ENCODE measurements at regions of chr17 and their contacts with region 1.

Region 1: GRCh38 chr17:45247429-45248131 is 14.3 kb downstream of the SPATA32 start:
- DNase-seq: peak; percentile 94
- H3K4me3 ChIP-seq: peak overlapping the region; percentile 67 to 84 (median 79)
- H3K27ac ChIP-seq: peak overlapping the region; percentile 31
- H3K4me1 ChIP-seq: peaks cover 16% of the 10 kb centered on the region
- H3K27me3 ChIP-seq: no peaks in the 10 kb centered on the region
- CTCF ChIP-seq: no peak

Region 2: DNA sequence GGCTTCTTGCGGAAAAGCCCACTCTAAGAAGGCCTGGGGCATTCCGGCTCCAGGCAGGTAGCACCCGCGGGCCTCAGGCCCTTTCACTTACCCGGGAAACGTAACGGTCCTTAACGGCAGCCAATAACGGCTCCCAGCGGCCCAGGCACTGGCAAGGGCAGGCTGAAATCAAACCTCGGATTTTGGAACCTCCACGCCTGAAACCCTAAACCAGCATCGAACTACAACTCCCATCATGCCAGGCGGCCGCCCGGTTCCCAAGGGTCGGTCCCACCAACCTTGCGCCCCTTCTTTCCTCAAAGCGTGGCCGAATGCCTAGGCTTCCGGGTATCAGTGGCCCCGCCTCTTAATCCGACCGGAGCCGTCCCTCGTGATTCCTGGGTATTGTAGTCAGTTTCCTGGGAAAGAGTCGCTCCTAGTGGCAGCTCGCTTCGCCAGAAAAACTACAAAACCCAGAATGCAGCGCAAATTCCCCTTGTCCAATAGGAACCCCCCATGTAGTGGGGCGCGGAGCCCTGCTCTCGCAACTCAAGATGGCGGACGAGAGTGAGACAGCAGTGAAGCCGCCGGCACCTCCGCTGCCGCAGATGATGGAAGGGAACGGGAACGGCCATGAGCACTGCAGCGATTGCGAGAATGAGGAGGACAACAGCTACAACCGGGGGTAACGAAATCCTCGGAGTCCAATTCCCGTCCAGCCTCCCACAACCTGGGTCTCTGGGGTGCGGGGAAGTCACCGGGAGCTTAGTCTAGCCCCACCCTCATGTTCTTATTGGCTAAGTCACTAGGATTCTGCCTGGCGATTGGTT is 186.6 kb before region 1 on chr17 and contains the start of gene NMT1:
- CTCF ChIA-PET with region 1: no interaction called
- dilution Hi-C with region 1: loop called (anchors 10 kb)
- in situ Hi-C with region 1: no loop called
- intact Hi-C with region 1: no loop called
- DNase-seq: peak; percentile 99
- H3K4me3 ChIP-seq: peak within 1 kb of the TSS; percentile 84 to 100 (median 92)
- H3K27ac ChIP-seq: peak within 1 kb of the TSS; percentile 94
- H3K4me1 ChIP-seq: peaks cover 13% of the 10 kb centered on the region
- H3K27me3 ChIP-seq: no peaks in the 10 kb centered on the region
- CTCF ChIP-seq: no peak
- total RNA-seq, gene NMT1: 80.0 to 143 TPM

Region 3: GRCh38 chr17:45155029-45155428 is 92.6 kb before region 1 on chr17:
- CTCF ChIA-PET with region 1: no interaction called
- dilution Hi-C with region 1: loop called (anchors 5 kb)
- in situ Hi-C with region 1: no loop called
- intact Hi-C with region 1: no loop called
- DNase-seq: no peak
- H3K4me3 ChIP-seq: no peak overlapping the region
- H3K27ac ChIP-seq: no peak overlapping the region
- H3K4me1 ChIP-seq: peaks cover 18% of the 10 kb centered on the region
- H3K27me3 ChIP-seq: no peaks in the 10 kb centered on the region
- CTCF ChIP-seq: no peak

Region 4: DNA sequence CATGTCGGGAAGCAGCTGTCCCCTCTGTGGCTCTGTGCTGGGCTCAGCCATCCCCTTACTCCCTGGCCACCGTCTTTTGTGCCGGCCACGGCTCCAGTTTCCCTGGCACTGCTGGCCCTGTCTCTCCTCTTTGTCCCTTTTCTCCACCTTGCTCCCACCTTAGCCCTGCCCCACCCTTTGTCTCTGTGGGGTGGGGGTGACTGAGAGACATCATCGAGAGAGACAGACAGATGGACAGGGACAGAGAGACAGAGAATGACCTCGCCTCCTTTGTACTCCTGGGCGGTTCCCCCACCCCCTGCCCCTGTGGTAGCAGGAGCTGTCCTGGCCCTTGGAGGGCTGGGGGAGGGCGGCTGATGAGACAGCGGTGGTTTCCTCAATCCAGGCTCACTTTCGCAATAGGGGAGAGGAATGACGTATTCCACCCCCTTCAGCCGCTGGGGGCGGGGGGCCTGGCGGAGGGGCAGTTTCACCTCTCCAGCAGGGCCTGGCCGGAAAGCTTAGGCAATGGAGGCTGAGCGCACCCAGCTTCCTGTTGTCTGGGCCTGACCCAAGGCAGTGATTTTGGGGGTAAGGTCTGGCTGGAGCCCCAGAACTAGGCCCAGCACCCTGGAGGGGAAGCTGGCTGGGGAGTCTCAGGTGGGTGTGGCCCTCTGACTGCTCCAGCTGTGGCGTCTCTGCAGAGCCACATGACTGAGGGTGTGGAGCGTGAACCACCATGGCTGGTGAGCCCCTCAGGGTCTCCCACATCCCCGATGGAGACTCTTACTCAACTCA is 18.6 kb before region 1 on chr17:
- CTCF ChIA-PET with region 1: no interaction called
- dilution Hi-C with region 1: no loop called
- in situ Hi-C with region 1: no loop called
- intact Hi-C with region 1: loop called (anchors 2 kb)
- DNase-seq: peak; percentile 90
- H3K4me3 ChIP-seq: no peak overlapping the region
- H3K27ac ChIP-seq: peak overlapping the region; percentile 50
- H3K4me1 ChIP-seq: peaks cover 50% of the 10 kb centered on the region
- H3K27me3 ChIP-seq: no peaks in the 10 kb centered on the region
- CTCF ChIP-seq: no peak

Region 5: GRCh38 chr17:45293413-45294211 is 46.0 kb after region 1 on chr17:
- CTCF ChIA-PET with region 1: no interaction called
- dilution Hi-C with region 1: no loop called
- in situ Hi-C with region 1: no loop called
- intact Hi-C with region 1: loop called (anchors 1 kb)
- DNase-seq: peak; percentile 81
- H3K4me3 ChIP-seq: no peak overlapping the region
- H3K27ac ChIP-seq: no peak overlapping the region
- H3K4me1 ChIP-seq: peaks cover 53% of the 10 kb centered on the region
- H3K27me3 ChIP-seq: no peaks in the 10 kb centered on the region
- CTCF ChIP-seq: peak in 1 of 2 donors; percentile 30

Measured in mammary epithelial cell (primary cell).